Panc1 (cell line): ENCODE measurements at regions of chr18 and their contacts with region 1.

Region 1: DNA sequence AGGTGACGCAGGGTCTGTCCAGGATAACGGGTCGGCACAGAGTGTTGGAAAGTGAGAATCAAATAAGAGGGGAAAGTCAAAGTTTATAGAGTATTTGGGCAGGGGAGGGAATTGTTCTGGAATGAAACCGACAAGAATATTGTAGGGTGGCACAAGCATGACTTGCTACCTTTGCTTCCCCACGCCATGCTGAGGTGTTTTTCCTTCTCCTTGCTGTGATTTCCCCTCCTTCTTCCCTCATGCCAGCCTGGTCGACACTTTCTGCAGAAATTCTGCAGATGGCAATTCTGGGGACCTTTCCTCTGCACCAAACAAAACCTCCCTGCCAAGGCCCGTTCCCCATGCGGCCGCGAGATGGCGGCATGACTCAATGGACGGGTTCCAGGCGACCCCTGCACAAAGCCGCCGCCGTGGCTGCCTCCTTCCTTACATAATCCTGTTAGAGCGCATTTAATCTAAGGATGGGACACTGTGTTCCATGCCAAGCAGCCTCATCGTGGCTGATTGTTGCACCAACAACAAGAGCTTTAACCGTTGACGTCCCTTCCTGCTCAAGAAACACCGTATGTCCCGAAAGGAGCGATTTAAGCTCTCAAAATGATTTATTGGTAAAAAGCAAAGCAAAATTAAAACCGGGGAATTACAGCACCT is at the start of gene MRO:
- DNase-seq: peak; percentile 41
- ATAC-seq: peak; percentile 97
- H3K4me3 ChIP-seq: peak within 1 kb of the TSS; percentile 27 to 51
- H3K27ac ChIP-seq: no peak within 1 kb of the TSS
- H3K4me1 ChIP-seq: no peaks in the 10 kb centered on the region
- H3K27me3 ChIP-seq: no peaks in the 10 kb centered on the region
- CTCF ChIP-seq: peak; percentile 79
- total RNA-seq, gene MRO: not detected

Region 2: GRCh38 chr18:50866765-50867164 is 46.9 kb after region 1 on chr18:
- CTCF ChIA-PET with region 1: no interaction called
- POLR2A ChIA-PET with region 1: no interaction called
- in situ Hi-C with region 1: no loop called
- intact Hi-C with region 1: loop called (anchors 2 kb)
- DNase-seq: no peak
- ATAC-seq: no peak
- H3K4me3 ChIP-seq: no peak overlapping the region
- H3K27ac ChIP-seq: no peak overlapping the region
- H3K4me1 ChIP-seq: no peaks in the 10 kb centered on the region; the same call in 1 of the 2 replicates
- H3K27me3 ChIP-seq: no peaks in the 10 kb centered on the region
- CTCF ChIP-seq: no peak; the same call in 1 of the 2 replicates

Region 3: DNA sequence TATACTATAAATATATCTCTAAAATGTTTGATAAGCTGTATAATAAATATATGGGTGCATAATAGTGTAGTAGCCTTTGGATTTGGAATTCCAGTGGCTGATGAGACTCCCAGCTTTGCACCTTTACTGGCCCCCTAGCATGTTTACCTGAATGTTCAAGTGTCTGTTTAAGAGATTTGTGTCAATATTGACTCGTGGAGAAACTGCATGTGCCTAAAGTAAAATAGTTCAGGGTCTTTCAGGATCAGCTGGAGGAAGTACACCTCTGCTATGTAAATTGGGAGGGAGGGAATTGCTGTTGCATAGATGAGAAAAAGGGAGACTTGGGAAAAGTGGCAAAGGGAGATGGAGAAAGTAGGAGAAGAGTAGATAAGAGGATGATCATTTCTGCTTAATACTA is 82.9 kb after region 1 on chr18:
- CTCF ChIA-PET with region 1: no interaction called
- POLR2A ChIA-PET with region 1: no interaction called
- in situ Hi-C with region 1: no loop called
- intact Hi-C with region 1: no loop called
- DNase-seq: no peak
- ATAC-seq: no peak
- H3K4me3 ChIP-seq: no peak overlapping the region
- H3K27ac ChIP-seq: no peak overlapping the region
- H3K4me1 ChIP-seq: no peaks in the 10 kb centered on the region
- H3K27me3 ChIP-seq: no peaks in the 10 kb centered on the region
- CTCF ChIP-seq: no peak

Region 4: GRCh38 chr18:51051105-51051712 is 231.4 kb after region 1 on chr18:
- CTCF ChIA-PET with region 1: no interaction called
- POLR2A ChIA-PET with region 1: no interaction called
- in situ Hi-C with region 1: no loop called
- intact Hi-C with region 1: loop called (anchors 2 kb)
- DNase-seq: no peak
- ATAC-seq: peak; percentile 88
- H3K4me3 ChIP-seq: no peak overlapping the region
- H3K27ac ChIP-seq: no peak overlapping the region
- H3K4me1 ChIP-seq: no peaks in the 10 kb centered on the region
- H3K27me3 ChIP-seq: no peaks in the 10 kb centered on the region
- CTCF ChIP-seq: peak; percentile 71